Activated CD4-positive, alpha-beta T cell treated with anti-CD3 and anti-CD28 coated beads for 36 hours (primary cell): ENCODE measurements at regions of chr1 and their contacts with region 1.

Region 1: GRCh38 chr1:160925652-160926241 is 28.9 kb downstream of the ITLN2 start:
- DNase-seq: no peak
- ATAC-seq: no peak
- H3K4me3 Mint-ChIP-seq: no peak overlapping the region
- H3K27ac Mint-ChIP-seq: no peak overlapping the region
- H3K4me1 Mint-ChIP-seq: no peaks in the 10 kb centered on the region
- H3K27me3 Mint-ChIP-seq: peaks cover 8% of the 10 kb centered on the region

Region 2: GRCh38 chr1:160891474-160891873 is 34.3 kb before region 1 on chr1:
- CTCF ChIA-PET with region 1: no interaction called
- POLR2A ChIA-PET with region 1: no interaction called
- intact Hi-C with region 1: loop called in 1 of 2 experiments (anchors 5 kb)
- DNase-seq: no peak
- ATAC-seq: no peak
- H3K4me3 Mint-ChIP-seq: no peak overlapping the region
- H3K27ac Mint-ChIP-seq: no peak overlapping the region
- H3K4me1 Mint-ChIP-seq: no peaks in the 10 kb centered on the region
- H3K27me3 Mint-ChIP-seq: peaks cover 8% of the 10 kb centered on the region

Region 3: DNA sequence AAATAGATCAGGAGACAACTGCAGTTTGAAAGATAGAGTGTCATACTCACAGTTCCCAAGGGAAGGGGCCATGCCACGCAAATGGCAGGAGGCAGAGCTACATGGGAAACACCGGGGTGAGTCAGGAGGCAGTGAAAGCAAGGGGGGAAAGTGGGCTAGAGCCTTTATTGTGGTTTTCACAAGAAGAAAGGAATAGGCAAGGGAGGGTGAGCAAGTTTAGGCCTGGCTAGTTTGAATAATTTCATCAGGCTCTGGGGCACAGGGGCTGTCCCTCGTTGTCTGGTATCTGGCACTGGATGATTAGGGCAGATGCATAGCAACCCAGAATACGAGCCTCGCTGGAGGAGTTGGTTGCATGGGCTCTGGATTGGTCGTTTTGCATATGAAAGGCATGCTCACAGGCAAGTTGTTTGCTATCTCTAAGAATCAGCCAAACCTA is 45.9 kb after region 1 on chr1:
- CTCF ChIA-PET with region 1: no interaction called
- POLR2A ChIA-PET with region 1: no interaction called
- intact Hi-C with region 1: loop called in 1 of 2 experiments (anchors 5 kb)
- DNase-seq: peak; percentile 68
- ATAC-seq: peak; percentile 98
- H3K4me3 Mint-ChIP-seq: no peak overlapping the region
- H3K27ac Mint-ChIP-seq: no peak overlapping the region
- H3K4me1 Mint-ChIP-seq: peaks cover 10% of the 10 kb centered on the region
- H3K27me3 Mint-ChIP-seq: peaks cover 4% of the 10 kb centered on the region